Mammary epithelial cell (primary cell): ENCODE measurements at regions of chr12 and their contacts with region 1.

Region 1: GRCh38 chr12:71746983-71747611 is 7.6 kb upstream of the RAB21 start:
- DNase-seq: peak; percentile 50
- H3K4me3 ChIP-seq: no peak overlapping the region
- H3K27ac ChIP-seq: no peak overlapping the region
- H3K4me1 ChIP-seq: no peaks in the 10 kb centered on the region
- H3K27me3 ChIP-seq: no peaks in the 10 kb centered on the region
- CTCF ChIP-seq: peak; percentile 72 to 81

Region 2: GRCh38 chr12:71216725-71217579 is 530.1 kb before region 1 on chr12:
- CTCF ChIA-PET with region 1: no interaction called
- dilution Hi-C with region 1: no loop called
- in situ Hi-C with region 1: no loop called
- intact Hi-C with region 1: loop called (anchors 5 kb)
- DNase-seq: peak; percentile 42
- H3K4me3 ChIP-seq: no peak overlapping the region
- H3K27ac ChIP-seq: no peak overlapping the region
- H3K4me1 ChIP-seq: no peaks in the 10 kb centered on the region
- H3K27me3 ChIP-seq: no peaks in the 10 kb centered on the region
- CTCF ChIP-seq: peak; percentile 40 to 61

Region 3: DNA sequence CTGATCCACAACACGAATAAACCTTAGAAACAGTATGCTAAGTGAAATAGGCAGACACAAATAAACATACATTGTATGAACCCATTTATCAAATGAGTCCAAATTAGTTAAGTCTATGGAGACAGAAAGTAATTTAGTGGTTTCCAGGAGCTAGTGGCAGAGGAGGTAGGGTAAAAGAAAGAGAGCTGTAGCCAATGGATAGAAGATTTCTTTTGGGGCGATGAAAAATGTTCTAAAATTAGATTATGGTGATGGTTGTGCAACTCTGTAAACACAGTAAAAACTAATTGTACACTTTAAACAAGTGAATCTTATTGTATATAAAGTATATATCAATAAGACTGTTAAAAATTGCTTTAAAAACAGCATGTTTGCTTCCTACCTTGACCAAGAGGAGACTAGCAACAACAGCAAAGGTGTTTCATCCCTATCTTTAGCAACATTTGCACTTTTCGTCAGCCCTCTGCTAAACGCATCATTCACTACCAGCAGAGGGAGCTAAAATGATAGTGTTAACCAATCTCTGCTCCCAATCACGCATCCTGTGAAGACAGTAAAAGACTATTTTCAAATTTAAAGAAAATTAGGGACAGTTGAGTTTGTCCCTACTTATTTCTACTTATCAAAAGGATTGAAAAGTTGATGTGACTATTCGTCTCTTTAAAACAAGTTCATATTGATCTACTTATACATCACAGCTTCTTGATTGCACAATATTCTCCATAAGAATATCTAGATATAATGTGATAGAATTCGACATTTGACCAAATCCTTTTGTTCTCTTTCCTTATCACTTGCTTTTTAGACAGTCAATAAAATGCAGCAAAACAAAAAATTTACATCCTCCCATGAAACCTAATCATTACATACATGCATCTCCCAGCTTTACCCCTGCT is 331.5 kb before region 1 on chr12:
- CTCF ChIA-PET with region 1: interaction called, 8 read pairs
- dilution Hi-C with region 1: no loop called
- in situ Hi-C with region 1: loop called (anchors 25 kb)
- intact Hi-C with region 1: loop called (anchors 1 kb)
- DNase-seq: peak; percentile 34
- H3K4me3 ChIP-seq: no peak overlapping the region
- H3K27ac ChIP-seq: no peak overlapping the region
- H3K4me1 ChIP-seq: no peaks in the 10 kb centered on the region
- H3K27me3 ChIP-seq: no peaks in the 10 kb centered on the region
- CTCF ChIP-seq: peak; percentile 81

Region 4: DNA sequence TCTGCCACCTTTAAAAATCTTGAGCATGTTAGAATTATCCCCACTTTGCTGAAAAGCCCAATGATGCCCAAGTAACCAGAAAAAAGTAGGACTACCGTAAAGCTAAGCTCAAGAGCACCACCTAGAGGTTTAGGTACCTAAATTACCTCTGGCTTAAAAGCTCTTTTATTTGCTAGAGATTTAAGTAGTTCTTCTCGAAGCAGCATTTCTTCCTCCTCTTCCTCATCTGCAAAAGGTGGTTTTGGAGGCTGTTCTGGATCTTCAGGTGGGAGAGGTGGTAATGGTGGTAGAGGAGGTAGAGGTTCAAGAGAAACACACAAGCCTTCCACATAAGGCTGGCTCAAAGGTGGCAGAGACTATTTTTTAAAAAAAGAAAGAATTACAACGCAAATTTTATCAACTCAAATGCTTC is 110.4 kb before region 1 on chr12:
- CTCF ChIA-PET with region 1: interaction called, 11 read pairs
- dilution Hi-C with region 1: no loop called
- in situ Hi-C with region 1: no loop called
- intact Hi-C with region 1: loop called (anchors 1 kb)
- DNase-seq: peak; percentile 46
- H3K4me3 ChIP-seq: no peak overlapping the region
- H3K27ac ChIP-seq: no peak overlapping the region
- H3K4me1 ChIP-seq: no peaks in the 10 kb centered on the region
- H3K27me3 ChIP-seq: no peaks in the 10 kb centered on the region
- CTCF ChIP-seq: peak; percentile 77 to 81

Region 5: DNA sequence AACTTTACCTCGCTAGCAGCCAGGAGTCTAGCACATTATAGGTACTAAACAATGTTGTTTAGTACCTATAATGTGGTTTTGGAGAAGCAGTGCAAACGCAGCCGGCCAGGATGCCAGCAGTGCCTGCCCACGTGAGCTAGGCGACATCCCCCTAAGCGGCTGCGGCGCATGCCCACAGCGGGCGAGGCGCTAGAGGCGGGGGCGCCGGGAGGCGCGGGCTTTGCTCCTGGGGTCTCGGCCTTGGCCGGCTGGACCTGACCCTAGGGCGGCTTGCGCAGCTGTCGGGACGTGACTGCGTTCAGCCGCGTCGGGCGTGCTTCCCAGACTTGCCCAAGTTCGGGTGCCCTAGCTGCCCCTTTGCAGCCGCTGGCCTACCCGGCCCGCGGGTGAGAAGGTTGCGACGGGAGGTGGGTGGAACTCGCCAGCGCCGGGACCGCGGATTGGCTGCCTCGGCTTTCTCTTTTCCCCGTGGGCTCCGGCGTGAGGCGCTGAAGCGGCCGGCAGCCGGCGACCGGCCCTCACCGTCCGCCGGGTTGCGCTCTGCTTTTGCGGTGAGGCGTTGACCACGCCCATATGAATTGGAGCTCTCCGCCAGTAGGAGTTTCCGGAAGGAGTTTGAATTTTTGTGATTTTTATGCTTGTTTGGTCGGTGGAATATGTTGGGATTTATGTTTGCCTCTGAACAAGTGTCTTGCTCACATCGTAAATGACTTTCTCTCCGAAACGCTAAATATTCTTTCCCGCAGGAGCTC is 61.0 kb before region 1 on chr12 and contains the start of gene TMEM19:
- CTCF ChIA-PET with region 1: interaction called, 19 read pairs
- dilution Hi-C with region 1: no loop called
- in situ Hi-C with region 1: loop called in 1 of 2 experiments (anchors 10 kb)
- intact Hi-C with region 1: loop called (anchors 1 kb)
- DNase-seq: peak; percentile 91
- H3K4me3 ChIP-seq: peak within 1 kb of the TSS; percentile 86 to 97 (median 89)
- H3K27ac ChIP-seq: peak within 1 kb of the TSS; percentile 81
- H3K4me1 ChIP-seq: peaks cover 11% of the 10 kb centered on the region
- H3K27me3 ChIP-seq: no peaks in the 10 kb centered on the region
- CTCF ChIP-seq: peak in 1 of 2 donors; percentile 65
- total RNA-seq, gene TMEM19: 22.1 to 41.7 TPM

Region 6: DNA sequence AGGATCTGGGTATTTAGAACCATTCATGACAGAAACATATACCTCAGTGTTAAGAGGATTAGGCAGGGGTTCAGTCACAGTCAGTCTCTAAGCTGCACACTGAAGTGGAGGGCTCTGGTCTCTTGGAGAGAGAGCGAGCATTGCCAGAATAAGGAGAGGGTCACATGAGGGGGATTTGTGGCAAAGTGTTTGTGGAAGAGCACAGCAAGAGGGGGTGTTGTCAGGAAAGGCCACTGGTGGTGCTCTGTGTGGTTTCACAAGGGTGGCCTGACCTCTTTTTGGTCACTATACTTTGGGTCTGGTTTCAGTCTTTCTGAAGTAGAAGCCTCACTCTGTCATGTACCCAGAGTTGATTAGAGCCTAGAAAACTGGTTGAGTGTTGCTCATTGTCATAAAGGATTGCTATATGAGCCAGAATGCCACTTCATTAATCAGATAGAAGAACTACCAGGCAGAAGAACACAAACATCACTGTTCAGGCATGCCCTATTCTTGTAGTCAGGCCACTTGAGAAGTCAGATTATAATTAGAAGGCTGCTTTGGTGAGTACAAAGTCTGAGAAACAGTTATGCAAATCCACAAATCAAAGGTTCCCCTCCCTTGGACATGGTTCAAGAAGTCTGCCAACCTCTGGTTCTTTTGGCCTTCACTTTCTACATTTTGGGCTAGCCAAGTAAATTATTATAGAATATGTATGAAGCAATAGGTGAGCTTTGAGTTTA is 52.8 kb before region 1 on chr12:
- CTCF ChIA-PET with region 1: no interaction called
- dilution Hi-C with region 1: no loop called
- in situ Hi-C with region 1: loop called in 1 of 2 experiments (anchors 10 kb)
- intact Hi-C with region 1: no loop called
- DNase-seq: peak; percentile 71
- H3K4me3 ChIP-seq: no peak overlapping the region
- H3K27ac ChIP-seq: no peak overlapping the region
- H3K4me1 ChIP-seq: peaks cover 13% of the 10 kb centered on the region
- H3K27me3 ChIP-seq: no peaks in the 10 kb centered on the region
- CTCF ChIP-seq: no peak